Cardiac septum (tissue), 1 donor: ENCODE measurements at regions of chr2 and their contacts with region 1.

Region 1: DNA sequence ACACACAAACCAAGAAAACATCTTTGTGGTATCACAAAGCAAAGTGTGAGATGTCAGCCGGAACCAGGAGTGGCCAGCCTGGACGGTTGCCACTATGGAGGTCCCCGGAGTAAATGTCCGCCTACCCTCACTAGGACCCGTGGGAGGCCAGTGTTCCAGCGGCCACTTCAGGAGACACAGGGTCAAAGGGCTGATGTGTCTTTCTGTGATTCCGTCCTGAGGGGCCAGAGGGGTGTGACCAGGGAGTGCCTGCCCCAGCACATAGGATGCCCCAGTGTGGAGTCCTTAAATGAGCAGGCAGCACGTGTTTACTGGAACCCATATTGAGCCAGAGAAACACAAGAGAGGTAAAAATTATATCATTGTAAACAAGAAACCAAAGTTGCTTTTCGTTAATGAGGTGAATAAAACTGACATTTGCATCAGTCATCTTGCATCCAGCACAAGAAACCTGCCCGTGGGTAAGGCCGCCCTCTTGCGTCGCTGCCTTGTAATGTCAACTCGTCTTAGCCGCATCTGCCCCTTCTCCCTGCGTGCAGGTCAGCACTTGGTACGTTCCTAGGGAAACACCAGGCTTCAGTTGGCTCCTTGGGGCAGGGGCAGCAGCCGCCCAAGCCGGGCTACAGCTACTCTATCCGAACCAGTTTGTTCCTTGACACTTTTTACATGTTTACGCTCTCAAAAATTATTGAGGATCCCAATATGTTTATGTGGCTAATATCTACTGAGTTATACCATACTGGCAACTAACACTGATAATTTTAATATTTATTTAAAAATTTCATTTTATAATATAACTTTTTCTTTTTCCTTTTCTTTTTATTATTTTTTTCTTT is 46.7 kb upstream of the LAPTM4A start:
- DNase-seq: peak; percentile 92

Region 2: GRCh38 chr2:19955544-19956422 is 142.3 kb before region 1 on chr2:
- intact Hi-C with region 1: loop called (anchors 1 kb)
- DNase-seq: no peak

Region 3: DNA sequence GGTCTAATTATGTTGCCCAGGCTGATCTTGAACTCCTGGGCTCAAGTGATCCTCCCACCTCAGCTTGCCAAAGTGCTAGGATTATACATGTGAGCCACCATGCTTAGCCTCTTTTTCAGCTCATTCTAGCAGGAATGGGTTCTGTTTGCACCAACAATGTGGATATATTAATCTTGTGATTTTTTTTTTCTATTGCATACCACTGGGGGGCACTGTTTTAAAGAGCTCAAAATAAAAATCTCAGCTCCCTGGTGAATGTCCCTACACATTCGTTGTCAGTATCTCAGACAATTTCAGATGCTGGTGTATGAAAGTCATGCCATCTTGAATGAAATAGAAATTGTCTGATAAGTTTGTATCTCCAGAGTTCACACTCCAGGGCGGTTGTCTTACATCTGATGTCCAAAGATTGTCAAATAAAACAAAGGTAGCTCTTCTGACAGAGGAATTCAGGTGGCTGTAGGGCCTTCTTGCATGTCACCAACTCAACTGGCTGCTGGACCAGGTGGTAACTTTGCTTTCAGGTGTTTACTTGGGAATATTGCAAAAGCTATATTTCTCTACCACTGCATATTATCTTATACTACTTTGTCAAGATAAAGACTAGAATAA is 82.5 kb before region 1 on chr2:
- intact Hi-C with region 1: loop called (anchors 2 kb)
- DNase-seq: no peak

Region 4: GRCh38 chr2:21346984-21347383 is 1248.9 kb after region 1 on chr2:
- intact Hi-C with region 1: no loop called
- DNase-seq: no peak